ENCODE measurements at regions of chr7 and their contacts with region 1.

Region 1: GRCh38 chr7:101287032-101287431 is 34.6 kb downstream of the IFT22 start:
- DNase-seq: no peak
- H3K4me3 ChIP-seq: no peak overlapping the region
- H3K27ac ChIP-seq: no peak overlapping the region
- H3K4me1 ChIP-seq: no peaks in the 10 kb centered on the region
- H3K27me3 ChIP-seq: peaks cover 2% of the 10 kb centered on the region
- CTCF ChIP-seq: no peak

Region 2: GRCh38 chr7:101031082-101031481 is 255.9 kb before region 1 on chr7:
- CTCF ChIA-PET with region 1: no interaction called
- dilution Hi-C with region 1: no loop called
- in situ Hi-C with region 1: no loop called
- intact Hi-C with region 1: no loop called
- DNase-seq: peak; percentile 8
- H3K4me3 ChIP-seq: no peak overlapping the region
- H3K27ac ChIP-seq: no peak overlapping the region
- H3K4me1 ChIP-seq: no peaks in the 10 kb centered on the region
- H3K27me3 ChIP-seq: peaks cover 3% of the 10 kb centered on the region
- CTCF ChIP-seq: peak in 1 of 2 donors; percentile 39

Region 3: DNA sequence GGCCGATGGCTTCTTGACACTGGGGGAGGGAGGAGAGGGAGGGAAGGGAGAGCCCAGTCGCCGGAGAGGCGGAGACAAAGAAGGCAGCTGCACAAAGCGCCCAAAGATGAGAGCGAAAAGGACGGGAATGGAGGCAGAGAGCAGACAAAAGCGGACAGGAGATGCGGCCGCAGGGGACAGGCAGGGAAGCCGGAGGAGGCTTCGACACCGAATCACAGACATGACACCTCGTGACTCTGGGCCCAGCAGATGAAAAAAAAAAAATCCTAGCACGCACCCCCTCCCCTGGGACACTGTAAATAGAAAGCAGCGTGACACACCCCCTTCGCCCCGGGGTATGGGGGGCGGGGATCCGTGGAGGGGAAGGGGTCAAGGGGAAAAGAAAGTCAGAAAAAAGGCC is 107.9 kb before region 1 on chr7:
- CTCF ChIA-PET with region 1: no interaction called
- dilution Hi-C with region 1: no loop called
- in situ Hi-C with region 1: no loop called
- intact Hi-C with region 1: no loop called
- DNase-seq: no peak
- H3K4me3 ChIP-seq: no peak overlapping the region
- H3K27ac ChIP-seq: no peak overlapping the region
- H3K4me1 ChIP-seq: peaks cover 6% of the 10 kb centered on the region
- H3K27me3 ChIP-seq: peaks cover 21% of the 10 kb centered on the region
- CTCF ChIP-seq: no peak

Region 4: GRCh38 chr7:101235050-101235449 is 52.0 kb before region 1 on chr7:
- CTCF ChIA-PET with region 1: no interaction called
- dilution Hi-C with region 1: no loop called
- in situ Hi-C with region 1: no loop called
- intact Hi-C with region 1: no loop called
- DNase-seq: no peak
- H3K4me3 ChIP-seq: no peak overlapping the region
- H3K27ac ChIP-seq: no peak overlapping the region
- H3K4me1 ChIP-seq: peaks cover 11% of the 10 kb centered on the region
- H3K27me3 ChIP-seq: no peaks in the 10 kb centered on the region
- CTCF ChIP-seq: peak; percentile 13 to 41

Region 5: DNA sequence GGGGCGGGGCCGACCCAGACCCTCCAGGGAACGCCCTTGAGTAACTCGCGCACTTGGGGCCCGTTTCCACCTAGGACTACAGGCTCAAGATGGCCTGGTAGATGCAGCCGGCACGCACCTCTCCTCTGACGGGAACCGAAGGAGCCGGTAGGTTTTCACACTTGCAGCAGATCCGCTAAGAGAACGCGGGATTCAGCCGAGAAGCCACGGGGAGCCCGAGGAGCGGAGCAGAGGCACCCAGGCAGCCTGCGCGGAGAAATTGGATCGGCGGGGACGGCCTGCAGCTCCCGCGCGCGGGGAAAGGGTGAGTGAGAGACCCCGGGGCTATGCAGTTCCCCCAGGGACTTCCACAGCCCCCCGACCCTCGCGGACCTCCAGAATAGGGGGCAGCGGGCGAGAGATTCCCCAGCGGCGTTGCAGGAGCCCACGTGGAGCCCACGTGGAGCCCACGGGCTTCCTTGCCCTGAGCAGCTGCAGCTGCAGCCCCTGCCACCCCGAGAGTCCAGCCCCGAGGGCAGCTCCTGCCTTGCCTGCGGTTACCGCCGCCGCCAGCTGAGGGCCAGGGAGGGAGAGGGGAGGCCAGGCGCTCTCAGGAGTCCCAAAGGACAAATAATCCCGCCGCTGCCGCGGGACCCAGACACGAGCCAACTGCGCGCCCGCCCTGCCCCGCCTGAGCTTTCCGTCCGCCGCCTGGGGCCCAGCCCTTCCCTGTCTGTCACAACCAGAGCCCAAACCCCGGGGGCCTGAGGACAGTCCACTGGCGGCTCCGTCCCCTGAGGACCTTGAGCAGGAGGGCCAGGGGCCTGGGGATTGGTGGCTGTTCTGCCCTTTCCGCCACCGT is 21.4 kb after region 1 on chr7:
- CTCF ChIA-PET with region 1: interaction called, 15 read pairs
- dilution Hi-C with region 1: no loop called
- in situ Hi-C with region 1: no loop called
- intact Hi-C with region 1: no loop called
- DNase-seq: peak; percentile 73
- H3K4me3 ChIP-seq: peak overlapping the region; percentile 66 to 83 (median 77)
- H3K27ac ChIP-seq: peak overlapping the region; percentile 8
- H3K4me1 ChIP-seq: peaks cover 4% of the 10 kb centered on the region
- H3K27me3 ChIP-seq: peaks cover under 1% of the 10 kb centered on the region
- CTCF ChIP-seq: no peak

Region 6: GRCh38 chr7:101436857-101437576 is 150.0 kb after region 1 on chr7:
- CTCF ChIA-PET with region 1: no interaction called
- dilution Hi-C with region 1: no loop called
- in situ Hi-C with region 1: no loop called
- intact Hi-C with region 1: loop called (anchors 1 kb)
- DNase-seq: no peak
- H3K4me3 ChIP-seq: no peak overlapping the region
- H3K27ac ChIP-seq: no peak overlapping the region
- H3K4me1 ChIP-seq: no peaks in the 10 kb centered on the region
- H3K27me3 ChIP-seq: peaks cover 2% of the 10 kb centered on the region
- CTCF ChIP-seq: no peak

Measured in mammary epithelial cell (primary cell).